ENCODE measurements at regions of chr1 and their contacts with region 1.

Region 1: GRCh38 chr1:65067491-65068201 is 80.4 kb upstream of the AK4 start:
- DNase-seq: peak; percentile 85

Region 2: GRCh38 chr1:64616039-64616438 is 451.6 kb before region 1 on chr1:
- in situ Hi-C with region 1: no loop called
- DNase-seq: peak; percentile 38

Region 3: GRCh38 chr1:64898107-64898845 is 169.4 kb before region 1 on chr1:
- in situ Hi-C with region 1: no loop called
- DNase-seq: no peak

Region 4: GRCh38 chr1:65209005-65209885 is 141.6 kb after region 1 on chr1:
- in situ Hi-C with region 1: loop called (anchors 25 kb)
- DNase-seq: peak; percentile 59